WTC11 (cell line): ENCODE measurements at regions of chr17 and their contacts with region 1.

Region 1: GRCh38 chr17:43778337-43779144 is at the start of gene DUSP3:
- DNase-seq: peak; percentile 96
- ATAC-seq: peak; percentile 84
- H3K4me3 Mint-ChIP-seq: peak within 1 kb of the TSS; percentile 81
- H3K27ac Mint-ChIP-seq: peak within 1 kb of the TSS; percentile 84
- H3K4me1 Mint-ChIP-seq: peaks cover 19% of the 10 kb centered on the region
- H3K27me3 Mint-ChIP-seq: peaks cover 24% of the 10 kb centered on the region
- CTCF ChIP-seq: no peak
- total RNA-seq, gene DUSP3: 28.4 to 31.5 TPM (median 30.0 TPM) in 3 replicates

Region 2: GRCh38 chr17:43694077-43694870 is 84.3 kb before region 1 on chr17:
- CTCF ChIA-PET with region 1: no interaction called
- POLR2A ChIA-PET with region 1: no interaction called
- DNase-seq: peak; percentile 86
- ATAC-seq: peak; percentile 91
- H3K4me3 Mint-ChIP-seq: no peak overlapping the region
- H3K27ac Mint-ChIP-seq: no peak overlapping the region
- H3K4me1 Mint-ChIP-seq: peaks cover 17% of the 10 kb centered on the region
- H3K27me3 Mint-ChIP-seq: 0 out of 2 replicates have a peak, but pooled peaks cover 2% of the 10 kb centered on the region
- CTCF ChIP-seq: peak; percentile 81

Region 3: GRCh38 chr17:43766413-43767052 is 12.0 kb before region 1 on chr17:
- CTCF ChIA-PET with region 1: interaction called, 12 read pairs
- POLR2A ChIA-PET with region 1: interaction called, 3 read pairs
- DNase-seq: peak; percentile 86
- ATAC-seq: peak; percentile 50
- H3K4me3 Mint-ChIP-seq: no peak overlapping the region
- H3K27ac Mint-ChIP-seq: no peak overlapping the region
- H3K4me1 Mint-ChIP-seq: peaks cover 9% of the 10 kb centered on the region
- H3K27me3 Mint-ChIP-seq: no peaks in the 10 kb centered on the region
- CTCF ChIP-seq: peak; percentile 82

Region 4: DNA sequence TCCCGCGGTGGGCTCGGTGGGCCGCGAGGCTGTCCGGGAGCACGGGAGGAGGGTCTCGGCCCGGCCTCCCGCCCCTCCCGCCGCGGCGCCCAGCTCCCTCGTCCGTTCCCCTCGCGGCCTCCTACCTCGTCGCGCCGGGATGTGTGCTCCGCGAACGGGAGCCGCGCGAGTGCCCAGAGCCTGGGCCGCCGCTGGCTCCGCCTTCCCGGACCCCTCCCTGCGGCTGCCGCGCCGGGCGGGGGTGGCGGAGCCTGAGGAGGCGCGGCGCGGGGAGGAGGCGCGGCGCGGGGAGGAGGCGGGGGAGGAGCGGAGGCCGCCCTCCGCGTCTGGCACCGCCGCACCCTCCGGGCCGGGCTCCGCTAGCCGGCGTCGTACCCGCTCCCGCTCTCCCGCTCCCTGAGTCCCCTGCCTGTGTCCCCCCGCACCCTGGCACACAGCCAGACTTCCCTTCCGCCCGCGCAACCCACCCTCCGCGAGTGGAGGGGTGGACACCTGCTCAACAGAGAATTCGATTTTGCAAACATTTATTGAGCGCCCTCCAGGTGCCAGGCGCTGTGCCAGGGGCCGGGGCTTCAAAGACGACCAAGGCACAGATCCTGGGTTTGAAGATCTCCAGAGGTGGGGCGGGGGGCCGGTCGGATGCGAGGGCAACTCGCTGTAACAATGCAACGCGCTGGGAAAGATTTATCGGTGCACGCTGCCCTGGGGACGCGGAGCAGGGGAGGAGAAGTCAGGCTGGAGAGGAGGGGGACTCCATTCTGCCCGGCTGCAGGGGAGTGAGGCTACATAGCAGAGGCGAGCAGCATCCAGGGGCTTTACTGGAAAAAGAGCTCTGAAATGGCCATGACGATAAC is 54.7 kb after region 1 on chr17 and contains the start of gene MPP3:
- CTCF ChIA-PET with region 1: no interaction called
- POLR2A ChIA-PET with region 1: no interaction called
- DNase-seq: peak; percentile 53
- ATAC-seq: peak; percentile 82
- H3K4me3 Mint-ChIP-seq: peak within 1 kb of the TSS; percentile 86
- H3K27ac Mint-ChIP-seq: no peak within 1 kb of the TSS; the same call in 1 of the 2 replicates
- H3K4me1 Mint-ChIP-seq: peaks cover 26% of the 10 kb centered on the region
- H3K27me3 Mint-ChIP-seq: peaks cover 36% of the 10 kb centered on the region
- CTCF ChIP-seq: no peak
- total RNA-seq, gene MPP3: 9.2 to 11.3 TPM (median 10.3 TPM) in 3 replicates

Region 5: DNA sequence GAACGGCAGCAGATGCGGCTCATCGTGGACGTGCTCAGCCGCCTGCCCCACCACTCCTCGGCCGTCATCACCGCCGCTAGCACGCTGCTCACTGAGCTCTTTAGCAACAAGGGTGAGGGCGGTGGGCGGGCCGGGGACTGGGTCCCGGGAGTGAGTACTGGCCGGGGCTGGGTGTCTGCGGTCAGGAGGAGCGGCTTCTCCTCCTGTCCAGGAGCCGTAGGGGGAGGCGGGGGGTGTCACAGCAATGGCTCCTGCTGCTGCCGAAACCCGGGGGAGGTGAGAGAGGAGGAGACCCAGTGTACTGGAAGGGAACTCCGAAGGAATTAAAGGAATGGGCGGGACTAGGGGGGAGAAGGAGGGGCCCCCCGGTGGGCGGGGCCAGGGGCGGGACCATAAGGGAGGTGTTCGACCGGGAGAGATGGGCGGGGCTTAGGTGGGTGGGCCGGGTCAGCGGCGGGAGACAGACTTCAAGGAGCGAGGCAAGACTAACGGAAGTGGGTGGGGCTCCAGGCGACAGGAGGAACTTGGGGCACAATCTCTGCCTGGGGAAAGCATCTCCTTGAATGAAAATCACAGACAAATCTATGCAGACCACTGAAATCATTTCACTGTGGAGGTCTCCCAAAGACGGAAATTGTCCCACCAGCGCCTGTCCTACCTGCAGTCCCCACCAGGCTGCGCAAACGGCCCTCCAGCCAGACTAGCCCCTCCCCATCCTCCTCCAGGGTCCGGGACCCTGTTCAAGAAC is 228.2 kb after region 1 on chr17:
- CTCF ChIA-PET with region 1: no interaction called
- POLR2A ChIA-PET with region 1: no interaction called
- DNase-seq: peak; percentile 100
- ATAC-seq: peak; percentile 62
- H3K4me3 Mint-ChIP-seq: peak overlapping the region; percentile 92
- H3K27ac Mint-ChIP-seq: peak overlapping the region; percentile 83
- H3K4me1 Mint-ChIP-seq: peaks cover 17% of the 10 kb centered on the region
- H3K27me3 Mint-ChIP-seq: peaks cover 23% of the 10 kb centered on the region
- CTCF ChIP-seq: peak; percentile 50